Transverse colon (tissue), 4 donors: ENCODE measurements at regions of chr5 and their contacts with region 1.

Region 1: DNA sequence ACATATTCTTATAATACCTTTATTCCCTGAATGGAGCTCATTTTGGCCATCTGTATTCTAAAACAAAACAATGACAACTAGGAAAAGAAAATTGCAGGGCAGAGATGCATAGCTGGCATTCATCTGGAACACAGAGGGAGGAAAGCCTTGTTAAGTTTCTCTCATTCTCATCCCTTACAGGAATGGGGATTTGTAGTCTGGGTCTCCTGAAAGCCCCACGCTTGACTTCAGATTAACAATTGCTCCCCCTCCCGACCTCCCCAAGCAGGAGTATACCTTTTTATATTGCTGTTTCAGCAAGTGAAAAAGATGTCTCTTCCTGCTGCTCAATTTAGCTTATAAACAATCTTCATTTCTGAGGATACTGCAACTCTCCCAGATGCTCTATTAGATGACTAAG is 812.1 kb downstream of the EFNA5 start:
- DNase-seq: no peak
- H3K4me3 ChIP-seq: no peak overlapping the region
- H3K27ac ChIP-seq: no peak overlapping the region
- H3K4me1 ChIP-seq: no peaks in the 10 kb centered on the region
- H3K27me3 ChIP-seq: no peaks in the 10 kb centered on the region
- CTCF ChIP-seq: no peak
- EP300 ChIP-seq: no peak
- POLR2A ChIP-seq: no peak

Region 2: DNA sequence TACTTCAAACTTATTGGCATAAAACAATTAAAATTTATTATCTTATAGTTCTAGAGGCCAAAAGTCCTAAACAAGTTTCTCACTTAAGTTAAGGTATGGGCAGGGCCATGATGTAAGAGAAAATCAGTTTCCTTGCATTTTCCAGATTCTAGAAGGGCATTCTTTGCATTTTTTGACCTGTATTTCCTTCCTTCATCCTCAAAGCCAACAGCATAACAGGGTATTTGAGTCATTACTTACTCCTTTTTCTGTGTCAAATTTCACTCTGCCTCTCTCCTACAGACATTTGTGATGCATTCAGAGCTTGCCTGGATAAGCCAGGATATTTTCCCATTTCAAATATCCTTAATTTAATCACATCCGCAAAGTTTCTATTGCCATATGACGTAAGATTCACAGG is 686.9 kb before region 1 on chr5:
- in situ Hi-C with region 1: no loop called
- intact Hi-C with region 1: no loop called
- DNase-seq: no peak
- H3K4me3 ChIP-seq: no peak overlapping the region
- H3K27ac ChIP-seq: no peak overlapping the region
- H3K4me1 ChIP-seq: no peaks in the 10 kb centered on the region
- H3K27me3 ChIP-seq: no peaks in the 10 kb centered on the region
- CTCF ChIP-seq: no peak
- EP300 ChIP-seq: no peak
- POLR2A ChIP-seq: no peak

Region 3: GRCh38 chr5:106873568-106873967 is 15.0 kb after region 1 on chr5:
- in situ Hi-C with region 1: no loop called
- intact Hi-C with region 1: loop called (anchors 1 kb)
- DNase-seq: peak; percentile 82
- H3K4me3 ChIP-seq: no peak overlapping the region
- H3K27ac ChIP-seq: peak overlapping the region in 3 of 4 donors; percentile 43 to 72 (median 49)
- H3K4me1 ChIP-seq: no peaks in the 10 kb centered on the region
- H3K27me3 ChIP-seq: no peaks in the 10 kb centered on the region
- CTCF ChIP-seq: no peak
- EP300 ChIP-seq: no peak
- POLR2A ChIP-seq: peak; percentile 44